Heart left ventricle (tissue), 16 donors: ENCODE measurements at regions of chr5 and their contacts with region 1.

Region 1: DNA sequence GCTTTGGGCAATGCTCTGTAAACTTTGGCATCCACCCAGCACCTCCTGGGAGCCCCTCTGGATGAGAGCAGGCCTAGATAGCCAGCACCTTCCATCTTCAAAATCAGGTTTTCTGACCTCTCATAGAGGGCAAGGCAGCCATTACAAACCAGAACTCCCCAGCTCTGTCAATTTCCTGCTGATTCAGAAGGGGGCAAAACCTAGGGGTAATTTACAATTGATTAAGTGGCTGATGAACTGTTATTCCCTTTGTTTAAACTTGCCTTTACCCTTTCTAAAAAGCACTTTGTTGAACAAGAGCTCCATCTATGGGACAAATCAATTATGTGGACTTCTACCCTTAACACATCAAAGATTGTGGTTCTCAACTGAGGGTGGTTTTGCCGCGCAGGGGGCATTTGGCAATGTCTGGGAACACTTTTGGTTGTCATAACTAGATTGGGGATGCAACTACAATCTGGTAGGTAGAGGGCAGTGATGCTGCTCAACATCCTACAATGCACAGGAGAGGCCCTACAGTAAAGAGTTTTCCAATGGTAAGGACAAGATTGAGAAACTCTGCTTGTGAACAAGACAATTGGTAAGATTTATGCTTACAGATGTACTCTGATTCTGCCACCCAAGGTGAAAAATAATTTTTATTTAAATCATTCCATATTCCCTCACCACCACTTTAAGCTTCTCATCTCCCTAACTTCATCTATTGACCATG is 184.1 kb downstream of the MARCHF11 start:
- DNase-seq: no peak
- ATAC-seq: peak in 2 of 4 donors; percentile 55 to 69
- H3K4me3 ChIP-seq: no peak overlapping the region
- H3K27ac ChIP-seq: no peak overlapping the region
- H3K4me1 ChIP-seq: peaks cover 0 to 10% (median 0%) of the 10 kb centered on the region in 12 donors
- H3K27me3 ChIP-seq: no peaks in the 10 kb centered on the region
- CTCF ChIP-seq: peak; percentile 31 to 74 (median 60)
- POLR2A ChIP-seq: no peak

Region 2: DNA sequence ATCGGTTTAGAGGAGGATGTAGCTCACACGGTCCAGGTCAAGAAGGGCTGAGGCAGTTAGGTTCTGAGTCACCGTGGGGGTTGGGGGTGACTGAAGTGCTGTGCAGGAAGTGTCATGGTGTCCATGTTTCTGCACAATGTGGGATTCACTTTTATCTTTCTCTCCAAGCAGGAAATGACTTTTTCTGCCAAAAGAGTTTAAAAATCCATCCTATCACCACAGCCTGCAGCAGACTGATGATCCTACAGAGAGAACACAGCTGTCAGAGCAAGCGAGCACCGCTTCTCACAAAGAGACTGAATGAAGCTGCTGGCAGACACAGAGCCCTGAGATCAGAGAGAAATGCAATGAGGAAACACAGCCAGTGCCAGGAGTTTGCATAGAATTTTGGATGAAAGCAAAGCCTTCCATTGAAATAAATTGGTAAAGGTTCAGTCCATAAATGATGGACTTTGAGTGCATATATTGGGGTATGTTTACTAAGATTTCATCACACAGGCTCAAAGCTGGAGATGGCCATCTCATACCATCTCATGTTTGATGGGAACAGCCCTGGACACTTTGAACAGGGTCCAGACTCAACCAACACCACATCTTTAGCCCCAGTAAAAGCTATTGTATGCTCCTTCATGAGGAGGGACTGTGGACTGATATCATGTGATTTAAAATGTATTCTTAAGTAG is 709.5 kb before region 1 on chr5:
- intact Hi-C with region 1: loop called in 1 of 10 experiments (anchors 10 kb)
- DNase-seq: peak in 4 of 5 donors; percentile 25 to 43 (median 29)
- ATAC-seq: peak; percentile 9 to 91 (median 73)
- H3K4me3 ChIP-seq: no peak overlapping the region
- H3K27ac ChIP-seq: no peak overlapping the region
- H3K4me1 ChIP-seq: peaks cover 0 to 7% (median 0%) of the 10 kb centered on the region in 12 donors
- H3K27me3 ChIP-seq: no peaks in the 10 kb centered on the region
- CTCF ChIP-seq: no peak
- POLR2A ChIP-seq: no peak

Region 3: GRCh38 chr5:15463231-15463980 is 532.1 kb before region 1 on chr5:
- intact Hi-C with region 1: loop called in 9 of 10 experiments (anchors 2 to 10 kb)
- DNase-seq: no peak
- ATAC-seq: no peak
- H3K4me3 ChIP-seq: no peak overlapping the region
- H3K27ac ChIP-seq: no peak overlapping the region
- H3K4me1 ChIP-seq: no peaks in the 10 kb centered on the region
- H3K27me3 ChIP-seq: no peaks in the 10 kb centered on the region
- CTCF ChIP-seq: peak in 11 of 12 donors; percentile 13 to 58 (median 52)
- POLR2A ChIP-seq: no peak

Region 4: GRCh38 chr5:15807871-15808270 is 187.6 kb before region 1 on chr5:
- intact Hi-C with region 1: loop called in 2 of 10 experiments (anchors 10 kb)
- DNase-seq: peak in 4 of 5 donors; percentile 61 to 72 (median 64)
- ATAC-seq: peak; percentile 86 to 96 (median 94)
- H3K4me3 ChIP-seq: no peak overlapping the region
- H3K27ac ChIP-seq: peak overlapping the region in 11 of 12 donors; percentile 21 to 58 (median 48)
- H3K4me1 ChIP-seq: peaks cover 0 to 32% (median 22%) of the 10 kb centered on the region in 12 donors
- H3K27me3 ChIP-seq: no peaks in the 10 kb centered on the region
- CTCF ChIP-seq: peak in 10 of 12 donors; percentile 10 to 56 (median 41)
- POLR2A ChIP-seq: no peak

Region 5: DNA sequence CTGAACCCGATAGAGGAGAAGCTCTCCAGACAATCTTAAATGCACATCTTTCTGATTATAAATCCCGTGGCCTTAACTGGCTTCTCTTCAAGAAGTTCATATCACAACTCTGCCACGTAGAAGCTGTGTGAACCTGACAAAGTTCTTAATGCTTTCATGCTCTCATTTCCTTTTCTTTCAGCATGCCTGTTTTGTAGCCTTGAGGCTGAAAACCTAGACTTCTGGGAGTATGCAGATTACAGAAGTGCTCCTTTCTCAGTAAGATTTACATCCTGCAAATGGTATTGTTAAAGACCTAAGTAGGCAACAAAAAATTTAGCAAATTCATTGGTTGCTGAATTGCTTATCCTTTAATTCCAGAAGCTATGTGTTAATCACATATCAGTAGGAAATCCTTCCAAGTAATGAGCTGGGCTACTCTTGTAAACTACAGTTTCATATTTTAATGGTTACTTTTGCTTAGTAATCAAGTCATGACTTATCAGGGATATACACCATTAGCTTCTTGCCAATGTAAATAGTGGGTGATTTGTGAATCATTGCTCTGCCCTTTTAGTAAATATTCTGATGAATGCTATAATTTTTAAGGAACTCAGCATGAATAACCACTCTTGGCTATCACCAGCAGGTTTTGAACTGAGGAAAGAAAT is 160.8 kb before region 1 on chr5:
- intact Hi-C with region 1: loop called in 4 of 10 experiments (anchors 10 kb)
- DNase-seq: no peak
- ATAC-seq: peak in 1 of 4 donors; percentile 44
- H3K4me3 ChIP-seq: no peak overlapping the region
- H3K27ac ChIP-seq: peak overlapping the region in 1 of 12 donors; percentile 2
- H3K4me1 ChIP-seq: peaks cover 0 to 66% (median 37%) of the 10 kb centered on the region in 12 donors
- H3K27me3 ChIP-seq: no peaks in the 10 kb centered on the region
- CTCF ChIP-seq: no peak
- POLR2A ChIP-seq: no peak

Region 6: GRCh38 chr5:16095612-16096011 is 100.1 kb after region 1 on chr5:
- intact Hi-C with region 1: no loop called
- DNase-seq: no peak
- ATAC-seq: peak in 2 of 4 donors; percentile 55 to 60
- H3K4me3 ChIP-seq: no peak overlapping the region
- H3K27ac ChIP-seq: no peak overlapping the region
- H3K4me1 ChIP-seq: no peaks in the 10 kb centered on the region
- H3K27me3 ChIP-seq: no peaks in the 10 kb centered on the region
- CTCF ChIP-seq: no peak
- POLR2A ChIP-seq: no peak